A673 (cell line): ENCODE measurements at regions of chr19 and their contacts with region 1.

Region 1: GRCh38 chr19:18167975-18168645 is 5.5 kb upstream of the IFI30 start:
- DNase-seq: peak; percentile 49
- H3K4me3 ChIP-seq: no peak overlapping the region
- H3K27ac ChIP-seq: no peak overlapping the region
- H3K4me1 ChIP-seq: no peaks in the 10 kb centered on the region
- H3K27me3 ChIP-seq: no peaks in the 10 kb centered on the region
- CTCF ChIP-seq: peak; percentile 77

Region 2: GRCh38 chr19:17847538-17848366 is 320.4 kb before region 1 on chr19 and contains the start of gene JAK3:
- CTCF ChIA-PET with region 1: no interaction called
- POLR2A ChIA-PET with region 1: no interaction called
- intact Hi-C with region 1: no loop called
- DNase-seq: peak; percentile 88
- H3K4me3 ChIP-seq: peak within 1 kb of the TSS; percentile 43
- H3K27ac ChIP-seq: peak within 1 kb of the TSS; percentile 59
- H3K4me1 ChIP-seq: peaks cover 9% of the 10 kb centered on the region
- H3K27me3 ChIP-seq: no peaks in the 10 kb centered on the region
- CTCF ChIP-seq: no peak
- total RNA-seq, gene JAK3: 2.4 and 2.5 TPM in 2 replicates

Region 3: GRCh38 chr19:18007044-18007916 is 160.8 kb before region 1 on chr19:
- CTCF ChIA-PET with region 1: no interaction called
- POLR2A ChIA-PET with region 1: no interaction called
- intact Hi-C with region 1: loop called (anchors 5 kb)
- DNase-seq: peak; percentile 83
- H3K4me3 ChIP-seq: peak overlapping the region; percentile 43
- H3K27ac ChIP-seq: no peak overlapping the region
- H3K4me1 ChIP-seq: peaks cover 8% of the 10 kb centered on the region
- H3K27me3 ChIP-seq: no peaks in the 10 kb centered on the region
- CTCF ChIP-seq: peak; percentile 99

Region 4: DNA sequence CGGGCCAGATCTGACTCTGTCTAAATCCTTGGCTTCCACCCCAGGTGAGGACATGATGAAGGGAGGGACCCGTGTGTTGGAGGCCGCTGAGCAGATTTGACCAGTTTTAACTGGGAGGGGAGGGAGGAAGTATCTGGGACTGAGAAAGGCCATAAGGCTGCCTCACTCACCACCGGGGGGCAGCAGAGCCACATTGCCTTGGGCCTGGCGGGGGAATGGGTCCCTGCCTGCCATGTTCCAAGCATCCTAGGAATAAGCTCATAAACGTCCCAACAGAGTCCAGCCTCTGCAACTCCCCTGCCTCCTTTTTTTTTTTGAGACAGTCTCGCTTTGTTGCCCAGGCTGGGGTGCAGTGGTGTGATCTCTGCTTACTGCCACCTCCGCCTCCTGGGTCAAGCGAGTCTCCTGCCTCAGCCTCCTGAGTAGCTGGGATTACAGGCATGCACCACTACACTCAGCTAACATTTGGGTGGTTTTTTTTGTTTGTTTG is 55.1 kb before region 1 on chr19:
- CTCF ChIA-PET with region 1: interaction called, 5 read pairs
- POLR2A ChIA-PET with region 1: no interaction called
- intact Hi-C with region 1: loop called (anchors 5 kb)
- DNase-seq: peak; percentile 86
- H3K4me3 ChIP-seq: no peak overlapping the region
- H3K27ac ChIP-seq: no peak overlapping the region
- H3K4me1 ChIP-seq: peaks cover 10% of the 10 kb centered on the region
- H3K27me3 ChIP-seq: no peaks in the 10 kb centered on the region
- CTCF ChIP-seq: peak; percentile 84

Region 5: GRCh38 chr19:18191640-18192062 is 23.5 kb after region 1 on chr19:
- CTCF ChIA-PET with region 1: no interaction called
- POLR2A ChIA-PET with region 1: no interaction called
- intact Hi-C with region 1: no loop called
- DNase-seq: no peak
- H3K4me3 ChIP-seq: peak overlapping the region; percentile 65
- H3K27ac ChIP-seq: peak overlapping the region; percentile 82
- H3K4me1 ChIP-seq: peaks cover 15% of the 10 kb centered on the region
- H3K27me3 ChIP-seq: no peaks in the 10 kb centered on the region
- CTCF ChIP-seq: no peak

Region 6: GRCh38 chr19:18233224-18233825 is 65.2 kb after region 1 on chr19:
- CTCF ChIA-PET with region 1: no interaction called
- POLR2A ChIA-PET with region 1: no interaction called
- intact Hi-C with region 1: no loop called
- DNase-seq: peak; percentile 72
- H3K4me3 ChIP-seq: no peak overlapping the region
- H3K27ac ChIP-seq: no peak overlapping the region
- H3K4me1 ChIP-seq: peaks cover 15% of the 10 kb centered on the region
- H3K27me3 ChIP-seq: no peaks in the 10 kb centered on the region
- CTCF ChIP-seq: no peak